Uterus (tissue), 4 donors: ENCODE measurements at regions of chr7 and their contacts with region 1.

Region 1: DNA sequence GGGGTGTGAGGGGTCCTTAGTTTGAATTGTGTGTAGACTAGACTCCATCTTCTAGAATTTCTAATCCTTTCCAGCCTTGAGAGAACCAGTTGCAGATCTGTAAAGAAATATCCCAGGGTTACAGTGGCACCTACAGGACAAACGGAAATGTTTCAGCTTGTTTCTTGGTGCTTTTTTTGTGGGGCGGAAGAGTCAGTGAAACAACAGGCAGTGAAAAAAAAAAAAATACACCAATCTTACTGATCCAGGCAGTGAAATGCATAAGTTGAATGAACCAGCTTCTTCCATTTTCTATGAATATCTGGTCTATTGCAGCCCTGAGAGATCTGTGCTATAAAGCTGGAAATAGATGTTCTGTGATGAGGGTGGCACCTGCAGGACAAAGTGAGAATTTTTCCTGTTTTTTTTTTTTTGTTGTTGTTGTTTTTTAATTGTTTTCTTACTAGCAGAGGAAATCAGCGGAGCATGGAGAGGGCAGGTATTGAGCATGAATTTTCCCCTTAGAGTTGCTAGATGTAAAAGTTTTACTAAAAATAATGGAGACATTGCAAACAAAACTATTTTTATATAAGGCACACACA is 81.9 kb upstream of the DYNC1I1 start:
- DNase-seq: no peak
- H3K4me3 ChIP-seq: no peak overlapping the region
- H3K27ac ChIP-seq: no peak overlapping the region
- H3K4me1 ChIP-seq: no peaks in the 10 kb centered on the region
- H3K27me3 ChIP-seq: peaks cover 0 to 7% of the 10 kb centered on the region in 2 donors
- CTCF ChIP-seq: peak; percentile 50 to 63 (median 52)
- POLR2A ChIP-seq: no peak

Region 2: DNA sequence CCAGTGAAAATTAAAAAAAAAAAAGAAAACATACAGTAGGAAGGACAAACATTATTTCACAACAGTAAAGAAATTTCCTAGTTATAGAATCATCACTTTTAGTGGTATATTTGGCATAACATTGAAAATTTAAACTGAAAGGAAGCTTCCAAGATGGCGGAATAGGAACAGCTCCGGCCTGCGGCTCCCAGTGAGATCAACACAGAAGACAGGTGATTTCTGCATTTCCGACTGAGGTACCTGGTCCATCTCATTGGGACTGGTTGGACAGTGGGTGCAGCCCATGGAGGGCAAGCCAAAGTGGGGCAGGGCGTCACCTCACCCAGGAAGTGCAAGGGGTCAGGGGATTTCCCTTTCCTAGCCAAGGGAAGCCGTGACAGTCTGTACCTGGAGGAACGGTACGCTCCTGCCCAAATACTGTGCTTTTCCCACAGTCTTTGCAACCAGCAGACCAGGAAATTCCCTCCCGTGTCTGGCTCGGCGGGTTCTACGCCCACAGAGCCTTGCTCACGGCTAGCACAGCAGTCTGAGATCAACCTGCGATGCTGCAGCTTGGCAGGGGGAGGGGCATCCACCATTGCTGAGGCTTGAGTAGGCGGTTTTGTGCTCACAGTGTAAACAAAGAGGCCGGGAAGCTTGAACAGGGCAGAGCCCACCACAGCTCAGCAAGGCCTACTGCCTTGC is 313.7 kb before region 1 on chr7:
- intact Hi-C with region 1: no loop called
- DNase-seq: no peak
- H3K4me3 ChIP-seq: no peak overlapping the region
- H3K27ac ChIP-seq: no peak overlapping the region
- H3K4me1 ChIP-seq: no peaks in the 10 kb centered on the region
- H3K27me3 ChIP-seq: no peaks in the 10 kb centered on the region
- CTCF ChIP-seq: no peak
- POLR2A ChIP-seq: no peak

Region 3: GRCh38 chr7:95509199-95509598 is 181.3 kb before region 1 on chr7:
- intact Hi-C with region 1: loop called (anchors 5 kb)
- DNase-seq: no peak
- H3K4me3 ChIP-seq: no peak overlapping the region
- H3K27ac ChIP-seq: no peak overlapping the region
- H3K4me1 ChIP-seq: no peaks in the 10 kb centered on the region
- H3K27me3 ChIP-seq: no peaks in the 10 kb centered on the region
- CTCF ChIP-seq: no peak
- POLR2A ChIP-seq: no peak

Region 4: GRCh38 chr7:95527033-95527775 is 163.3 kb before region 1 on chr7:
- intact Hi-C with region 1: loop called (anchors 5 kb)
- DNase-seq: peak; percentile 47 to 68
- H3K4me3 ChIP-seq: no peak overlapping the region
- H3K27ac ChIP-seq: peak overlapping the region in 1 of 2 donors; percentile 21
- H3K4me1 ChIP-seq: no peaks in the 10 kb centered on the region
- H3K27me3 ChIP-seq: no peaks in the 10 kb centered on the region
- CTCF ChIP-seq: peak; percentile 89 to 92 (median 91)
- POLR2A ChIP-seq: no peak